ENCODE measurements at regions of chr15 and their contacts with region 1.

Region 1: DNA sequence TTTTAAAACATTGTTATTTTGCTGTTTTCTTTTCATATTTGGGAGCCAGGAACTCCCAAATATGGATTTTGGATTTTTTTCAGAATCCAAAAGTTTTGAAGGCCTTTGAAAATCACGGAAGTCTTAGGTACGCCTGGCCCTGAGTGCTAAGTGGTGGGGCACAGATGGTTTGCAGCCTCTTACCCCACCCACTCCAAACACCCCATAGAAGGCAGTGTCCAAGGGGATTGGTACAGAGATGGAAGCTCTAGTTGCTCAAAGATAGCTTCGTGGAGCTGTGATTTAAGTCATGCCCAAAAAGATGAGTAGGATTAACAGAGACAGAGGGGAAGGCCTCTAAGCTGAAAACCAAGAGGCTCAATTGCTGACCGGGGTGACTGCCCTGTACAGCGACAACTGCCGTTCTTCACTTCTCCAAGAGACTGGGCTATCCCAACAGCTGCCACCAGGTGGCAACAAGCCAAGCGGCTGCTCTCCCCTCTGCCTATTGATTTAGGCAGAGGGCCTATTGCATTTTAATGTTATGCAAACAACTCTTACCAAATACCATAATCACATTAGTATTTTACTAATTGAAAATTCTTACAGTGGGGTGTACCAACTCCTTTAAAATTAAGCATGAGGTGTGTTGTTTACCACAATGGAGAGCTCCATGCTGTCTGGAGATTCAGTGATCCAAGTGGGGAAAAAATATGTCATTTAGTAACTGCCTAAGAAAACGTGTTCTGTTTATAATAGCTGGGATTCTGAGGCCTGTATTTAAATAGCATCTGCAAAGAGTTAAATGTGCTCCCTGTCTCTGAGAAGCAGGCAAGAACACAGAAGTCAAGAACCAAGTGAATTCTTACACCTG is 64.0 kb upstream of the C15orf61 start:
- DNase-seq: peak; percentile 77
- H3K4me3 ChIP-seq: no peak overlapping the region; a peak in 1 of 4 replicates
- H3K27ac ChIP-seq: no peak overlapping the region
- H3K4me1 ChIP-seq: peaks cover 0 to 17% of the 10 kb centered on the region in 2 experiments; a peak in 2 of 4 replicates
- H3K27me3 ChIP-seq: no peaks in the 10 kb centered on the region
- CTCF ChIP-seq: peak; percentile 92
- EP300 ChIP-seq: no peak
- RAD21 ChIP-seq: peak; percentile 86

Region 2: DNA sequence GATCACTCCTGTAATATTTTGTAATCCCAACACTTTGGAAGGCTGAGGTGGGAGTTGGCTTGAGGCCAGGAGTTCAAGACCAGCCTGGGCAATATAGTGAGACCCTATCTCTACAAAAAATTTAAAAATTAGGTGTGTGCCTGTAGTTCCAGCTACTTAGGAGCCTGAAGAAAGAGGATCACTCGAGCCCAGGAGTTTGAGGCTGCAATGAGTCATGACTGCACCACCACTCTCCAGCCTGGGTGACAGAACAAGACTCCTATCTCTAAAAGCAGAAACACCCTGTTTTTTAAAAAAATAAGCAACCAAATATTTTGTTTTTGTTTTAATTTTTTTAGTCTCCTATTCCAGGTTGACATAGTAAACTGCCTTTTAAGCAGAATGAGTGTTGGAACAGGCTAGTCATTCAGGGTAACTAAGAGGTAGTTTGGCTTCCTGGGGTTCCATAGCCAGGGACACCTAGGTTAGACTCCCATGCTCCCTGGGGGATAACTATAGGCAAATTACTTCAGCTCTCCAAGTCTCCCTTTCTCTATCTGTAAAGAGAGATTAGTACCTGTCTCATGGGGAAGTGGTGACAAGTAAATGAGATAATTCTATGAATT is 50.5 kb before region 1 on chr15:
- CTCF ChIA-PET with region 1: no interaction called
- POLR2A ChIA-PET with region 1: no interaction called
- DNase-seq: no peak
- H3K4me3 ChIP-seq: no peak overlapping the region
- H3K27ac ChIP-seq: no peak overlapping the region
- H3K4me1 ChIP-seq: no peaks in the 10 kb centered on the region; a peak in 1 of 4 replicates
- H3K27me3 ChIP-seq: no peaks in the 10 kb centered on the region
- CTCF ChIP-seq: no peak
- EP300 ChIP-seq: no peak
- RAD21 ChIP-seq: no peak

Region 3: GRCh38 chr15:67444100-67444499 is 12.8 kb before region 1 on chr15:
- CTCF ChIA-PET with region 1: interaction called, 27 read pairs
- POLR2A ChIA-PET with region 1: no interaction called
- DNase-seq: no peak
- H3K4me3 ChIP-seq: no peak overlapping the region
- H3K27ac ChIP-seq: no peak overlapping the region
- H3K4me1 ChIP-seq: no peaks in the 10 kb centered on the region; a peak in 1 of 4 replicates
- H3K27me3 ChIP-seq: no peaks in the 10 kb centered on the region
- CTCF ChIP-seq: no peak
- EP300 ChIP-seq: no peak
- RAD21 ChIP-seq: no peak

Region 4: DNA sequence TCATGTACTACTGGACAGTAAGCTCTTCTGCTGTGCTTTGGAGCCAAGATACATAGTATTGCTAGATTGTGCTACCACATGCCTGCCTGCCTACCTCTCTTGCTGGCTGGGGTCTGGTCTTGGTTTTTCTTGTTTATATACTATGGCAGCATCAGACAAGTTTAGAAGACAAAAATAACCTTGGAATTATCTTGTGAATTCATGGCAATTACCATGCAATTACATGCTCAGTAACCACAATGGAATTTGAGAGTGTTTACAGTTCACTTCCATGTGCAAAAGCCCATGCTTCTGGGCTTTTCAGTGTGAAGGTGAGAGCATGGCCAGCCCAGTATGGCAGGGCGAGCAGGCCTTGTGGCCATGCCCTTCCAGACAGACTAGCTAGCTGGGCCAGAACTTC is 16.1 kb after region 1 on chr15:
- CTCF ChIA-PET with region 1: interaction called, 18 read pairs
- POLR2A ChIA-PET with region 1: no interaction called
- DNase-seq: no peak
- H3K4me3 ChIP-seq: no peak overlapping the region
- H3K27ac ChIP-seq: no peak overlapping the region
- H3K4me1 ChIP-seq: no peaks in the 10 kb centered on the region; a peak in 1 of 4 replicates
- H3K27me3 ChIP-seq: no peaks in the 10 kb centered on the region
- CTCF ChIP-seq: no peak
- EP300 ChIP-seq: no peak
- RAD21 ChIP-seq: no peak

Region 5: DNA sequence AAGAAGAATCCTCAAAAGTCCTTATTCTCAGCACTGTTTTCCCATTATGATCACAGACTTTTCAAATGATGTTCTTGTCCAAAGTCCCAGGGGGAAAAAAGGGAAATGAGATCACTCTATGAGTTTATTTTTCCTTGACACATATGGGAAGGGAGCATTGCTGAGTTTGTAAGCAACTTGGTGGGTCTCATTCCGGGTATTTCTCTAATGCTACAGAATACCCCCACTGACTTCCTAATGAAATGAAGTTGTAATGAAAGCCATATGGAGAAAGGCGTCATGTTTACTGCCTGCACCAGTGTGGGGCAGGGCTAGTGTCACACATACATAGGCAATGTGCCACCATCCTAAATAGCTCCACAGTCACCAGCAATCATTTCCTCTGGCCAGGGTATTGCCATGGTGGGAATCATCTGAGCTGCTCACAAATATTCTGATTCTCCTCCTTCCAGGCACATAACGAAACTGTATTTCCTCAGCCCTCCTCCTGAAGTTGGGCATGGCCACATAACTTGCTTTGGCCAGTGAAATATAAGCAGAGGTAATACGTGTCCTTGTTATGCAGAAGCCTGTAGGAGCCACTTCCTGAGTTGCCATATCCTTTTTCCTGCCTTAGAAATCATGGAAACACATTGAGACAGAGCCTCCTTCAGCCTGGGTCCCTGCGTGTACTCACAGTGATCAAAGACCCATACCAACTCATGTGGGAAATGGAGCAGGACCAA is 23.0 kb after region 1 on chr15:
- CTCF ChIA-PET with region 1: interaction called, 12 read pairs
- POLR2A ChIA-PET with region 1: no interaction called
- DNase-seq: peak; percentile 36
- H3K4me3 ChIP-seq: no peak overlapping the region
- H3K27ac ChIP-seq: peak overlapping the region in 1 of 2 experiments; percentile 7; a peak in 1 of 4 replicates
- H3K4me1 ChIP-seq: peaks cover 6% of the 10 kb centered on the region in 2 experiments; a peak in 2 of 4 replicates
- H3K27me3 ChIP-seq: no peaks in the 10 kb centered on the region
- CTCF ChIP-seq: no peak
- EP300 ChIP-seq: no peak
- RAD21 ChIP-seq: no peak

Region 6: GRCh38 chr15:67501177-67501835 is 44.4 kb after region 1 on chr15:
- CTCF ChIA-PET with region 1: interaction called, 19 read pairs
- POLR2A ChIA-PET with region 1: no interaction called
- DNase-seq: peak; percentile 38
- H3K4me3 ChIP-seq: no peak overlapping the region
- H3K27ac ChIP-seq: no peak overlapping the region
- H3K4me1 ChIP-seq: peaks cover 0 to 3% of the 10 kb centered on the region in 2 experiments; a peak in 2 of 4 replicates
- H3K27me3 ChIP-seq: no peaks in the 10 kb centered on the region
- CTCF ChIP-seq: peak; percentile 58
- EP300 ChIP-seq: no peak
- RAD21 ChIP-seq: peak; percentile 76

Region 7: DNA sequence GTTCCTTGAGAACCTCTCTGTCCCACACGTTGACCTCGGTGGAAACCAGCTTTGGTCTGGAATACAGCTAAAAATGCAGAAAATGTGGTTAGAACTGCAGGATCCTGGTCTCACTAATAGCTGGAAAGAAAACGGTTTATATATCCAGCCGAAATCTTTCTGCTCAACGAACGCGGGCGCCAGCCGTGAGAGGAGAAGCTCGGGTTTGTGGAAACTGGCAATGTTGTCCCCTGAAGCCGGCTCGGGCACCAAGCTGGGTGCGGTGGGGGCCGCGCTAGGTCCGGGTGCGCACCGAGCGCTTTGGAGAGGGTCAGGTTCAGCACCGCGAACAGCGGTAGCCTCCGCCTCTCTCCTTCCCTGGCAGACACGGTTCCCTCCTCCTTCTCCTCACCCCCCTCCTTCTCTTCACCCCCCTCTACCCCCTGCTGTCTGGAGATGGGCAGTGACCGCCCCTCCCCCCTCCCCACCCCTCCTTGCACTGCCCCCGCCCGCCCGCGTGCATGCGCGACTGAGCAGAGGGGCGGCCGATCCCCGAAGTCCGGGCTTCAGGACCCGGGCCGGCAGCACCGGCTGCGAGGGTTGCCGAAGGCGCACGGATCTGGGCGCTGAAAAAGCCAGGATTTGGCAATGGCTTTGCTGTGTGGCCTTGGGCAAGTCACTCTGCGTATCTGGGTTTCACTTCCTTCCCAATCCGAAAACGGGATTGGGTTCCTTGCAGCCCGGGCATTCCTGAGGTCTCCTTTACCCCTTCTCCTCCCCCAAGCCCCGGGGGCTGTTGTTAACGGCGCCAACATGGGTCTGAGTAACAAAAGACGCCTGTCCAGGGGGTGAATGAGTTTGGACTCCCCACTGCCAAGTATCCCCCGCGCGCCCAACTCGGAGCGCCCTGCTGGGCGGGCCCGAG is 368.3 kb after region 1 on chr15 and contains the start of gene SKOR1:
- CTCF ChIA-PET with region 1: interaction called, 23 read pairs
- POLR2A ChIA-PET with region 1: no interaction called
- DNase-seq: peak; percentile 65
- H3K4me3 ChIP-seq: no peak within 1 kb of the TSS; a peak in 1 of 4 replicates
- H3K27ac ChIP-seq: no peak within 1 kb of the TSS
- H3K4me1 ChIP-seq: peaks cover 0 to 22% of the 10 kb centered on the region in 2 experiments; a peak in 2 of 4 replicates
- H3K27me3 ChIP-seq: peaks cover 36% of the 10 kb centered on the region
- CTCF ChIP-seq: no peak
- EP300 ChIP-seq: no peak
- RAD21 ChIP-seq: no peak
- polyA plus RNA-seq, gene SKOR1: 0.18 and 0.26 TPM in 2 replicates

Region 8: DNA sequence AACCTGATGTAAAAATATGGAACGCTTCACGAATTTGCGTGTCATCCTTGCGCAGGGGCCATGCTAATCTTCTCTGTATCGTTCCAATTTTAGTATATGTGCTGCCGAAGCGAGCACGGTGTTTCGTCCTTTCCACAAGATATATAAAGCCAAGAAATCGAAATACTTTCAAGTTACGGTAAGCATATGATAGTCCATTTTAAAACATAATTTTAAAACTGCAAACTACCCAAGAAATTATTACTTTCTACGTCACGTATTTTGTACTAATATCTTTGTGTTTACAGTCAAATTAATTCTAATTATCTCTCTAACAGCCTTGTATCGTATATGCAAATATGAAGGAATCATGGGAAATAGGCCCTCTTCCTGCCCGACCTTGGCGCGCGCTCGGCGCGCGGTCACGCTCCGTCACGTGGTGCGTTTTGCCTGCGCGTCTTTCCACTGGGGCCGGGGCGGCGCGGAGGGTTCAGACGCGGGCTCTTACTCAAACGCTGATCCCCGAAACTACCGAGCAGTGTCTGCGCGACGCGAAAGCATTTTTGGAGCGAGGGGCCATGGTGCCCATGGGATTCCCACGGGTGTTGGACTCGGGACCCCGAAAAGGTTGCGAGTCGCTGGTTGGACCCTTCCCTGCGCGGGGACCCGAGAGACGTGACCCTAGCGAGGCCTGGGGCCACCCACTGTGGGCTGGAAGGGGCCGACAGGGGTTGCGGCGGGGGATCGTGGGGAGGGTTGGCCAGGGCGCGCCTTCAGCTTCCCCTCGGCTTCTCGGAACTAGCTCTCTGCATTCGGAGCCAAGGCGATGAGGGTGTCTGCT is 383.2 kb after region 1 on chr15 and contains the start of gene RNU6-1:
- CTCF ChIA-PET with region 1: interaction called, 123 read pairs
- POLR2A ChIA-PET with region 1: no interaction called
- DNase-seq: peak; percentile 94
- H3K4me3 ChIP-seq: peak within 1 kb of the TSS; percentile 73 to 97
- H3K27ac ChIP-seq: peak within 1 kb of the TSS; percentile 83 to 90
- H3K4me1 ChIP-seq: peaks cover 0 to 12% of the 10 kb centered on the region in 2 experiments; a peak in 2 of 4 replicates
- H3K27me3 ChIP-seq: no peaks in the 10 kb centered on the region
- CTCF ChIP-seq: no peak
- EP300 ChIP-seq: no peak
- RAD21 ChIP-seq: no peak
- polyA plus RNA-seq, gene RNU6-1: not detected in 2 replicates

Measured in SK-N-SH (cell line).